ENCODE measurements at regions of chrX and their contacts with region 1.

Region 1: GRCh38 chrX:15143050-15143824 is 126.6 kb downstream of the ASB9 start:
- DNase-seq: peak in 1 of 2 donors; percentile 44
- ATAC-seq: no peak
- H3K4me3 ChIP-seq: no peak overlapping the region
- H3K27ac ChIP-seq: no peak overlapping the region
- H3K4me1 ChIP-seq: no peaks in the 10 kb centered on the region
- H3K27me3 ChIP-seq: no peaks in the 10 kb centered on the region

Region 2: DNA sequence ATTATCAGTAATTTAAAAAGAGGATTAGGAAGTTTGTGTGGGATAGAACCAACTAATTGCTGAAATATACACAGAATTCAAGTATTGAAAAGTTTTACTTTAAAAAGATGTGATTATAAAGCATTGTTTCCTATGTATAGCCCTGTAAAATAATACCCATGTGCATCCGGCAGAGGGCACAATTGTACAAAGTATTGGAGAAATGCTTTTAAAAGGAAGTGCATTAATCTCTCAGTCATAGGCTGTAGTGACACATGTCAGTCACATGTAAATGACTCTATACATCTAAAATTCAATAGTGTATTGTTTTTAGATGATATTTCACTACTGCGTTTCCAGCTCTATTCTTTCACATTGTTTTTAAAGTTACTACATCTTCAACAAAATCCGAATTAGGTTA is 1103.9 kb before region 1 on chrX:
- intact Hi-C with region 1: loop called in 1 of 2 experiments (anchors 5 kb)
- DNase-seq: no peak
- ATAC-seq: no peak
- H3K4me3 ChIP-seq: no peak overlapping the region
- H3K27ac ChIP-seq: no peak overlapping the region
- H3K4me1 ChIP-seq: no peaks in the 10 kb centered on the region
- H3K27me3 ChIP-seq: no peaks in the 10 kb centered on the region

Region 3: DNA sequence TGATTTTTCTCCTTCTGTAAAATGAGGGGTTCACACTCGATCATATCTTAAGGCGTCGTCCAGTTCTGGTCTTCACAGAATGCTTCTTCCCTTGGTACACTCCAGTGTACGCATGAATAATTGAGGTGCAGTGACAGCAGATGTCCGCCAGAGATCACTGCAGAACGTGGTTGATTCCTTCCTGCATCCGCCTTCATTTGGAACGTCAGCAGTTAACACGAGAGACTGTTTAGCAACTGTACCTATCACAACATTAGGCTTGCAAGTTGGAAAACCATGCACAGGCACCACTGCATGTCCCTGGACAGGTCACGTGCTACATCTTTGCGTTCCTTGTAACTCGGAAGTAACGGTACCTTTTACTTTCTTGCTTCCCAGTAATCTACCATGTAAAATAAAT is 1047.5 kb before region 1 on chrX:
- intact Hi-C with region 1: loop called in 1 of 2 experiments (anchors 10 kb)
- DNase-seq: no peak
- ATAC-seq: no peak
- H3K4me3 ChIP-seq: no peak overlapping the region
- H3K27ac ChIP-seq: no peak overlapping the region
- H3K4me1 ChIP-seq: no peaks in the 10 kb centered on the region
- H3K27me3 ChIP-seq: no peaks in the 10 kb centered on the region

Region 4: GRCh38 chrX:15335135-15336022 is 192.1 kb after region 1 on chrX and contains the start of gene PIGA:
- intact Hi-C with region 1: no loop called
- DNase-seq: peak; percentile 97
- ATAC-seq: peak; percentile 98
- H3K4me3 ChIP-seq: peak within 1 kb of the TSS; percentile 44 to 82
- H3K27ac ChIP-seq: peak within 1 kb of the TSS in 1 of 2 donors; percentile 87
- H3K4me1 ChIP-seq: no peaks in the 10 kb centered on the region
- H3K27me3 ChIP-seq: no peaks in the 10 kb centered on the region
- total RNA-seq, gene PIGA: 13.9 to 20.4 TPM